MCF 10A (cell line): ENCODE measurements at regions of chr1 and their contacts with region 1.

Region 1: GRCh38 chr1:235971571-235972310 is 93.1 kb downstream of the NID1 start:
- DNase-seq: peak; percentile 98
- H3K4me3 Mint-ChIP-seq: no peak overlapping the region
- H3K27ac Mint-ChIP-seq: peak overlapping the region; percentile 9
- H3K4me1 Mint-ChIP-seq: peaks cover 17% of the 10 kb centered on the region
- H3K27me3 Mint-ChIP-seq: no peaks in the 10 kb centered on the region
- CTCF ChIP-seq: peak; percentile 99

Region 2: DNA sequence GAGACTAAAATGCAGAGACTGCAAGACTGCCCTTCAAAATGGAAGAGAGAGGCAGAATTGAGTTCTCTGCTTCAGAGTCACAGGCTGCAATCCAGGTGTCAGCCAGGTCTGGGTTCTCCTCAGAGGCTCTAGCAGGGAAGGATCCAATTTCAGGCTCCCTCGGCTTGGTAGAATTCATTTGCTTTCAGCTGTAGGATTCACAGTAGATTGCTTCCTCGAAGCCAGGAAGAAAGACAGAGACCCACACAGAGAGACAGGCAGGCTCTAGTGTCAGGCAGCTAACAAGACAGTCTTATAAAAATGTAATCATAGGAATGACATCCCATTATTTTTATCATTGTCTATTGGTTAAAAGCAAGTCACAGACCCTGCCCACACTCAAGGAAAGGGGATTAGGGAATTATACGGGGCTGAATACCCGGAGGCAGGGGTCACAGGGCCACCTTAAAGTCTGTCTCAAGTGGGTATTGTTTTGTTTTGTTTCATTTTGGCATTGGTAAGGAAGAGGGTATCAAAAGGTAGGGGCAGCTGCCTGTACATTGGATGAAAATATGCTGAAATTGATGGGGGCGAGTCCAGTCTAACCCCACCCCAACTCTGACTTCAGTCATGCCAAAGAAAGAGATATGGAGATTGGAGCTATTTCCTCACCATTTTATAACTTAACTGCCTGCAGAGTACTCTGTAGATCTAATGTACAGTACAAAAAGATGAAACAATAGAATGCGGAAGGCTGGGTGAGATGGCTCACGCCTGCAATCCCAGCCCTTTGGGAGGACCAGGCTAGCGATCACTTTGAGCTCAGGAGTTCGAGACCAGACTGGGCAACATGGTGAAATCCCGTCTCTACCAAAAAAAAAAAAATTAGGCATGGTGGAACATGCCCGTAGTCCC is 614.0 kb before region 1 on chr1:
- CTCF ChIA-PET with region 1: no interaction called
- POLR2A ChIA-PET with region 1: no interaction called
- intact Hi-C with region 1: no loop called
- DNase-seq: no peak
- H3K4me3 Mint-ChIP-seq: no peak overlapping the region
- H3K27ac Mint-ChIP-seq: no peak overlapping the region
- H3K4me1 Mint-ChIP-seq: no peaks in the 10 kb centered on the region
- H3K27me3 Mint-ChIP-seq: no peaks in the 10 kb centered on the region
- CTCF ChIP-seq: no peak

Region 3: GRCh38 chr1:235513495-235514366 is 458.0 kb before region 1 on chr1:
- CTCF ChIA-PET with region 1: interaction called, 19 read pairs
- POLR2A ChIA-PET with region 1: interaction called, 7 read pairs
- intact Hi-C with region 1: loop called (anchors 1 kb)
- DNase-seq: peak; percentile 94
- H3K4me3 Mint-ChIP-seq: no peak overlapping the region
- H3K27ac Mint-ChIP-seq: no peak overlapping the region
- H3K4me1 Mint-ChIP-seq: peaks cover 6% of the 10 kb centered on the region
- H3K27me3 Mint-ChIP-seq: no peaks in the 10 kb centered on the region
- CTCF ChIP-seq: peak; percentile 98

Region 4: GRCh38 chr1:235791532-235792060 is 180.1 kb before region 1 on chr1:
- CTCF ChIA-PET with region 1: interaction called, 22 read pairs
- POLR2A ChIA-PET with region 1: no interaction called
- intact Hi-C with region 1: no loop called
- DNase-seq: no peak
- H3K4me3 Mint-ChIP-seq: no peak overlapping the region
- H3K27ac Mint-ChIP-seq: no peak overlapping the region
- H3K4me1 Mint-ChIP-seq: peaks cover 6% of the 10 kb centered on the region
- H3K27me3 Mint-ChIP-seq: no peaks in the 10 kb centered on the region
- CTCF ChIP-seq: no peak

Region 5: DNA sequence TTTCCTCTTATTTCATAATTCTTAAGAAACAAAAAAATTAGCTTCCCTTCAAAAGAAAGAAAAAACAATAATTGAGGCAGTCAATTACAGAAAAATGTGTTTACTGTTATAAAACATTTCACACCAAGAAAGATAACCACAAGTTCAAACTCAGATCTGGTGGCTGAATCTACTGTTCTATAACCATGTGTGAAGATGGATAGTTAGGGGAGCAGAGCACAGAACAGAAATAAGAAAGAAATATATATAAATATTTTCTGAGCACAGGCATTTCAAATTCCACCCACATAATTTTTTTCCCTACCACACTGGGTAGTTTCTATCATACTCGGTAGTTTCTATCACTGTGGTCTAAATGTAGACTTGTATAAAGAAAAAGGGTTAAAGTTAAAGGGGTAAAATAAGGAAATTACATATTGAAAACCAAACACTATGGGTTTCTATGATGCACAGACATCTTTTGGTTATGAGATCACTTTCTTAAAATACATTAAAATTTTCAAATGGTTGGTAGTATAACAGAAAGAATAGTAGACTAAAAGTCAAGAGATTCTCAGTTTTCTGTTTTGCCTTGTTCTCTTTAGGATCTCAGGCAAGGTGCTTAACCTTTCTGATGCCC is 115.8 kb before region 1 on chr1:
- CTCF ChIA-PET with region 1: interaction called, 26 read pairs
- POLR2A ChIA-PET with region 1: interaction called, 4 read pairs
- intact Hi-C with region 1: no loop called
- DNase-seq: no peak
- H3K4me3 Mint-ChIP-seq: no peak overlapping the region
- H3K27ac Mint-ChIP-seq: no peak overlapping the region
- H3K4me1 Mint-ChIP-seq: peaks cover 20% of the 10 kb centered on the region
- H3K27me3 Mint-ChIP-seq: no peaks in the 10 kb centered on the region
- CTCF ChIP-seq: no peak

Region 6: DNA sequence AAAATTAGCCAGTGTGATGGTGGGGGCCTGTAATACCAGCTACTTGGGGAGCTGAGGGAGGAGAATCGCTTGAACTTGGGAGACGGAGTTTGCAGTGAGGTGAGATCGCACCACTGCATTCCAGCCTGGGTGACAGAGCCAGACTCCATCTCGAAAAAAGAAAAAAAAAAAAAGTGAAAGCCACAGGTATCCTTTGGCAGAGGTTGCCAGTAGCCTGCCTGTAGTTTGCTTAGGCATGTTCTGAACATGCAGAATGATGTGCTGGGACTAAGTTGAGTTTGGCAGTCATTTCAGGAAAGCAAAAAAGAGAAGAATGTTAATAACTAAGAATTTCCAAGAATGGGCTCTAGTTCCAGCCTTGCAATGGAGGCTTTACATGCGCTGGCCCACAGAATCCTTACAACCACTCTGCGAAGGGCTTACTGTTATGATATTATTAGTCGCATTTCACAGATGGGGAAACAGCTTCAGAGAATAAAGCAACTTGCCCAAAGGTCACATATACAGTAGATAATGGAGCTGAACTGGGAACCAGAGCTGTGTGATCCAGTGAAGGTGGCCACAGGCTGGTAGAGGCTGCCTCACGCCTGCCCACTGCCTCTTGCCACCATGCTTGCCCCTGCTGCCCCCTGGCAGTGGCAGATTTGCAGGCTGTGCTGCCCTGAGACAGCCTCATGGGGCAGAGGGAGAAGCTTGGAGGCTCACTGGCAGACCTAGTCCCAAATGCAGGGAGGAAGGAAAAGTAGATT is 38.5 kb before region 1 on chr1:
- CTCF ChIA-PET with region 1: interaction called, 52 read pairs
- POLR2A ChIA-PET with region 1: interaction called, 26 read pairs
- intact Hi-C with region 1: no loop called
- DNase-seq: peak; percentile 67
- H3K4me3 Mint-ChIP-seq: peak overlapping the region; percentile 18
- H3K27ac Mint-ChIP-seq: peak overlapping the region; percentile 52
- H3K4me1 Mint-ChIP-seq: peaks cover 51% of the 10 kb centered on the region
- H3K27me3 Mint-ChIP-seq: no peaks in the 10 kb centered on the region
- CTCF ChIP-seq: no peak

Region 7: GRCh38 chr1:235984041-235984825 is 12.5 kb after region 1 on chr1:
- CTCF ChIA-PET with region 1: interaction called, 63 read pairs
- POLR2A ChIA-PET with region 1: interaction called, 3 read pairs
- intact Hi-C with region 1: no loop called
- DNase-seq: peak; percentile 35
- H3K4me3 Mint-ChIP-seq: no peak overlapping the region
- H3K27ac Mint-ChIP-seq: peak overlapping the region; percentile 33
- H3K4me1 Mint-ChIP-seq: peaks cover 13% of the 10 kb centered on the region
- H3K27me3 Mint-ChIP-seq: no peaks in the 10 kb centered on the region
- CTCF ChIP-seq: no peak